Activated CD4-positive, alpha-beta T cell treated with anti-CD3 and anti-CD28 coated beads for 36 hours (primary cell): ENCODE measurements at regions of chr20 and their contacts with region 1.

Region 1: DNA sequence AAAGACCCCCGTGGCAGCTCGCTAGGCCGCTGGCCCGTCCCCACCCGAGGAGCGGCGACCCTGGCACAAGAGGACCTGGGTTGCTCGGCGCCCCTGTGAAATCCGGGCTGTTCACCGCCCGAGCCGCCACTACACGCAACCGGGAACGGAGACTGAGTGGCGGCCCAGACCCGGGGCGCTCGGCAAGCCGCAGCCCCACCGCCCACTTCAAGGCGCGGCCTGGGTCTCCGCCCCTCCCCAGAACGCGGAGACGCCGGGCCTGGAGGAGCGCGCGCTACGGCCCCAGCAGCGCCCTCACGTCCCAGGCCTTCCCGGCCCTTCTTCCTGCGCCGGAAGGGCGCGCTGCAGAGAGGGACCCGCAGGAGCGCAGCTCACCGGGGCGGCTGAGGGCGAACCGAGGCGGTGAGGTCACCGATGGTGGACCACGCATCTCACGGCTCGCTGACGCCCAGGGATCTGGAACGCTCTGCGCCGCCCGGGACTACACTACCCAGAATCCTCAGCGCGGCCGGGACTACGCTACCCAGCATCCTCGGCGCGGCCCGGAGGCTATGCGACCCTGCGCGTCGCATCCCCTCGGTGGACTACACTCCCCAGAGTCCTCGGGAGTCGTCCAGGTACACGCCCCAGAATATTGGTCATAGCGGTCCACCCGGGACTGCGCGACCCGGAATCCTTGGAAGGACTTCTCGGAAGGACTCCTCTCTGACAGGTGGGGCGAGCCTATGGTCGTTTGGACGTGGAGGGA is at the start of gene ZNF337:
- DNase-seq: peak; percentile 97
- ATAC-seq: peak; percentile 97
- H3K4me3 Mint-ChIP-seq: peak within 1 kb of the TSS; percentile 83
- H3K27ac Mint-ChIP-seq: peak within 1 kb of the TSS; percentile 84
- H3K4me1 Mint-ChIP-seq: peaks cover 41% of the 10 kb centered on the region
- H3K27me3 Mint-ChIP-seq: no peaks in the 10 kb centered on the region
- total RNA-seq, gene ZNF337: 12.6 TPM

Region 2: DNA sequence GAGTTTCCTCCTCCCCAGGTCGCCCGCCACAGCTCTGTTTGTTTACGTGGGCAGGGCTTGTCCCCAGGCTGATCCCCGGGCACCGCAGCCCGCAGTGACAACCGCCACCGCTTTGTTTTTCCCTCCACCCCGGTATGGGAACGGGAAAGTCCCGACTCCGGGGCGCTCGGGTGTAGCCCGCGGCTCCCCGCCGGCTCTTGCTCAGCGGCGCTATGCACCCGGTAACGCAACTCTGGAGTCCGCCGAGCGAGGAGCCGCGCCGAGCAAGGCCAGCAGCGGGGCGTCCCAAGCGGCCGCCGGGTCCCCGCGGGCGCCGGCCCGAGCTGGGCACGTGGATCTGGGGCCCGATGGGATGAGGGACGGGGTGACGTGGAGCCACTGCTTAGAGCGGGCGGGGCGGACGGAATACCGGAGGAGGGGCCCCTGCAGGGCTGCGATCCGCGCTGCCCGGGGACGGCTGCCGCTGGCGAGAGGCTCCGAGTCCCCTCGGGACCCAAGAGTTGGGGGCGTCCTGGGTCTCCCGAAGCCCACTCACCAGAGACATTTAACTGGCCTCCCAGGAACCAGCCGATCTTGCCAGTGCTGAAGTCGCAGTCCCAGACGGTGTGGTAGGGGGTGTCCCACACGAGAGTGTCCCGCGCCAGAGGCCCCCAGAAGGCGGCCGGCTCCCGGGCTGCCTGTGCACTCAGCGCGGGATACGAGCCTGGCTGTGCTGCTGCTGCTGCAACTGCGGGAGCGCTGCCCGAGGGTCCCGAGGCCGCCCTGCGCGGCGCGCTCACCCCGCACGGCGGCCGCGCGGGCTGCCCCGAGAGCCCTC is 639.1 kb before region 1 on chr20:
- CTCF ChIA-PET with region 1: no interaction called
- POLR2A ChIA-PET with region 1: no interaction called
- intact Hi-C with region 1: loop called in 1 of 2 experiments (anchors 2 kb)
- DNase-seq: peak; percentile 86
- ATAC-seq: peak; percentile 52
- H3K4me3 Mint-ChIP-seq: peak overlapping the region; percentile 74
- H3K27ac Mint-ChIP-seq: peak overlapping the region; percentile 77
- H3K4me1 Mint-ChIP-seq: peaks cover 53% of the 10 kb centered on the region
- H3K27me3 Mint-ChIP-seq: no peaks in the 10 kb centered on the region

Region 3: GRCh38 chr20:25584905-25585704 is 111.5 kb before region 1 on chr20 and contains the start of gene NINL:
- CTCF ChIA-PET with region 1: no interaction called
- POLR2A ChIA-PET with region 1: no interaction called
- intact Hi-C with region 1: loop called (anchors 1 to 5 kb)
- DNase-seq: peak; percentile 69
- ATAC-seq: peak; percentile 82
- H3K4me3 Mint-ChIP-seq: peak within 1 kb of the TSS; percentile 73
- H3K27ac Mint-ChIP-seq: peak within 1 kb of the TSS; percentile 81
- H3K4me1 Mint-ChIP-seq: peaks cover 15% of the 10 kb centered on the region
- H3K27me3 Mint-ChIP-seq: peaks cover 9% of the 10 kb centered on the region
- total RNA-seq, gene NINL: 3.3 to 4.1 TPM

Region 4: DNA sequence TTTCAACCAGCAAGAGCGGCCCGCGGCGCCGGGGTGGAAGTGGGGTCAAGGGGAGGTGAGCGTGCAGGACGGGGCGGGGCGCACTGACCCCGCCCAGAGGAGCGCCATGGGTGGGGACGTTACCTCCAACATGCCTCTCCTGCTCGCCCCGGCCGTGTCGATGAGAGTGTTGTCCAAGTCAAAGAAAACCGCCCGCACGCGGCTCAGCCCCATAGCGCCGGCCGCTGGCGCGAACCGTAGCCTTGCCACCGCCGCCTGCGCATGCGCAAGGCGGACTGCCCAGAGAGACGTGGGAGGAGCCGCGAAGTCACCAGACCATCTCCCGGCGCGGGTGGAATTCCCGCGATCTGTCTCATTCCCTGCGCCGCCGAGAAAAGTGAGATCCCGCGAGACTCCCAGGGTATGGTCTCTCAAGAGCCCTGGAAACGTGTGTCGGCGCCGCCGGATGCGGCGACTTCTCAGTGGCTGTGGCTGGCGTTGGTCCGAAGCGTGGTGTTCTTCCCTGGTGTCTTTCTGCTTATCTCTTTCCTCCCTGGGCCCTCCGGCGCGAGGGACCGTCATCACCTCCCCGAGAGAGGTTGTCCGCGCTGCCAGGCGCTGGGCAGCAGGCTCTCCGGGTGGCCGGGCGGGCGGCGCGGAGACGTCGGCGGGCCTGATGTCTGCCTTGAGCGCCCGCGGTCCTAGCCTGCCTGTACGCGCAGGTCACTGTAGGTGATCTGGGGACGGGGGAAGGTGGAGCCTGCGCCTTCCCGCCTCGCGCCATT is 72.6 kb before region 1 on chr20 and contains the start of gene NANP:
- CTCF ChIA-PET with region 1: no interaction called
- POLR2A ChIA-PET with region 1: no interaction called
- intact Hi-C with region 1: loop called (anchors 1 kb)
- DNase-seq: peak; percentile 95
- ATAC-seq: peak; percentile 87
- H3K4me3 Mint-ChIP-seq: peak within 1 kb of the TSS; percentile 80
- H3K27ac Mint-ChIP-seq: peak within 1 kb of the TSS; percentile 95
- H3K4me1 Mint-ChIP-seq: peaks cover 21% of the 10 kb centered on the region
- H3K27me3 Mint-ChIP-seq: no peaks in the 10 kb centered on the region
- total RNA-seq, gene NANP: 6.1 to 8.3 TPM

Region 5: DNA sequence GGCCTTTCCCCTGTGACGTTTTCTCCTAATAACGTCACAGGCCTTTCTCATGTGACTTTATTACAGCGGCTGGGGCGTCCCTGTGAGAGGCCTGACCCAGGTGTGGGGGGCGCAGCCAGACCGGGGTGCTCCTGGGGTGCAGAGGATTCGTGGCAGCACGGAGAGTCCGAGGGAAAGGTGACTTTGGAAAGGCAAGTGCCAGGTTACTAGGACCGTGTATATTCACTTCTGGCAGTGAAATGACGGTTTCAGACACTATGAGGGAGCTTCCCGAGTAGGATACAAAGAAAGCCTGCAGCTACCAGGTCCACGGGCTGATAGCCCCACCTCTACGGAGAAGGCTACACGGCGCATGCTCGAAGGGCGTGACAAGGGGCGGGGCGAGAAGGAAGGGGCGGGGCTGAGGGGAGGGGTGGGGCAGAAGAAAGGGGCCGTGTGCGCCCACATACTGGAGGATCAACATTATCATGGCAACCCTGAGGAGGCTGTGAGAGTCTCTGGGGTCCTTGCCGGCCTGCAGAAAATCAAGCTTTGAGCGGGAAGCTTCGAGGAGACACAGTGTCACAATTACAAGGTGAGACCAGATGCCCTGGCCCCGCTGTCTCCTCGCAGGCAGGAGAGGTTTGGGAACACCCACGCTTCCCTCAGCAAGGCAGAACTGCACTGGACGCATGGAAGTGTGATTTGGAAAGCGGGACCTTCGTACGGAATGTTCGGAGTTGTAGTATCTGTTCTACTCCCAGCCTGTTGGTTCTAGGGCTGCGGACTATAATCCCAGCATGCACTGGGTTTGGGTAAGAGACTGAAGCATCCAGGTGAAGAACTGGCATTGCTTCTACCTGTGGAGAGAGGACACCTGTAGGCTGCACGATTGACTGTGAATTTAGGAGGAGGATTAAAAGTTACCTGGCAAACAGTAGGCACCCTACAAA is 54.5 kb after region 1 on chr20:
- CTCF ChIA-PET with region 1: no interaction called
- POLR2A ChIA-PET with region 1: no interaction called
- intact Hi-C with region 1: loop called in 1 of 2 experiments (anchors 1 kb)
- DNase-seq: peak; percentile 82
- ATAC-seq: peak; percentile 97
- H3K4me3 Mint-ChIP-seq: peak overlapping the region; percentile 75
- H3K27ac Mint-ChIP-seq: peak overlapping the region; percentile 80
- H3K4me1 Mint-ChIP-seq: peaks cover 18% of the 10 kb centered on the region
- H3K27me3 Mint-ChIP-seq: no peaks in the 10 kb centered on the region